Body of pancreas (tissue), 4 donors: ENCODE measurements at regions of chr15 and their contacts with region 1.

Region 1: DNA sequence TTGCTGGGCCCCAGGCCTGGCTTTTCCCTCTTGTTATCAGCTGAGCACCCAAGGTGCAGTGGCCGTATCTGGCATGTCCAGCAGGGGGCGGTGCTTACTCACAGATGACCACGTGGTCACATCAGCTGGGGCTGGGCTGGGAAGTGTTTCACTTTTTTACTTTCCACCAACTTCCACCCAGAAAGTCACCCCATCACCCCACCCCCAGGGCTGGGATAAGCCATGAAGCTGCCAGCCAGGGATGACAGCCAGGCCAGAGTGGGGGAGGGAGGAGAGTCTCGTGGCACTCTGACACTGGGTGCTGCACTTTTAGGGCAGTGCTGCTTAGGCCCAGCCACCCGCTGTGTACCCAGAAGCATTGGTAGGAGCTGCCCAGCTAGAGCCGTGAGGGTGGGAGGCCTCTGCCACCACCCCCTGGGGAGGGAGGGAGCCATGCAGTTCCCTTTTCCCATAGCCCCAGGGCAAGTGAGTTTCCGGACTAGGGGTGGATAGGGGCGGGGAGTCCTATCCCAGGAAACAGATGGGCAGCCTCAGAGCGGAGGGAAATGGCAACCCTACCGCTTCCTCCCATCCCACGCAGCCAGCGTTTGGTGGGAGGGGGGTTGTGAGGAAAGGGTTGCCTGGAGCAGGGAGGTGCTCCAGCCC is 6.1 kb downstream of the PPCDC start:
- DNase-seq: peak; percentile 93 to 96 (median 94)
- ATAC-seq: peak; percentile 88
- H3K4me3 ChIP-seq: no peak overlapping the region
- H3K27ac ChIP-seq: peak overlapping the region in 3 of 4 donors; percentile 23 to 33 (median 26)
- H3K4me1 ChIP-seq: peaks cover 13% of the 10 kb centered on the region
- H3K27me3 ChIP-seq: no peaks in the 10 kb centered on the region
- CTCF ChIP-seq: peak; percentile 87 to 96 (median 93)
- POLR2A ChIP-seq: no peak

Region 2: DNA sequence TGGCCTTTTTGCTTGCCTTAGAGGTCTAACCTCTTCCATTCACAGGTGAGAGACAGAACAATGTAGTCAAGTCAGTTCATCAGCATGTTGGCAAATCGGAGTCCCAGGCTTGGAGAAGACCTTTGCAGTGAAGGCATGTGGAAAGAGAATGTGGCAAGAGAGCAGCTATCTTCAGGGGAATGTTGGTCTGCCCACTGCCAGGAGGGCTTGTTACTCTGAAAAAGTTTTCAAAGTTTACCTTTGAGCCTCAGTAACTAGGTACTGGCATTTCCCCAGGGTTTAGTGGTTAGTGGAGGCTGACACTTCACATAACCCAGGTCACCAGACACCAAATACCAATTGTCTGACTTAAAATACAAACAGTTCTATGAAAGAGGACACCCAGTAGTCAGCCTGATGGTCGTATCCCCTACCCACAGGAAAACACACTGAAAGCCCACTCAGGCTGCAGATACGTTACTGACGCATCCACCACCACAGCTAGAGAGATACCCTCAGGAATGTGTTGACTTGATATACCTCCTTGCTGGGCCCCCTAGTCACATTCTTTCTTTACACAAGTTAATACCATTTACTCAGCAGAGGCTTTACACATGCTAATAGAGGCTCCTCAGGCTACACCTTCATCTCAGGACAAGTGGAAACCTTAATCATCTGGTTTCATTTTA is 498.2 kb before region 1 on chr15:
- intact Hi-C with region 1: no loop called
- DNase-seq: no peak
- ATAC-seq: no peak
- H3K4me3 ChIP-seq: no peak overlapping the region
- H3K27ac ChIP-seq: no peak overlapping the region
- H3K4me1 ChIP-seq: no peaks in the 10 kb centered on the region
- H3K27me3 ChIP-seq: no peaks in the 10 kb centered on the region
- CTCF ChIP-seq: no peak
- POLR2A ChIP-seq: no peak

Region 3: GRCh38 chr15:74739905-74740304 is 289.6 kb before region 1 on chr15:
- intact Hi-C with region 1: no loop called
- DNase-seq: no peak
- ATAC-seq: no peak
- H3K4me3 ChIP-seq: no peak overlapping the region
- H3K27ac ChIP-seq: no peak overlapping the region
- H3K4me1 ChIP-seq: no peaks in the 10 kb centered on the region
- H3K27me3 ChIP-seq: no peaks in the 10 kb centered on the region
- CTCF ChIP-seq: no peak
- POLR2A ChIP-seq: no peak

Region 4: DNA sequence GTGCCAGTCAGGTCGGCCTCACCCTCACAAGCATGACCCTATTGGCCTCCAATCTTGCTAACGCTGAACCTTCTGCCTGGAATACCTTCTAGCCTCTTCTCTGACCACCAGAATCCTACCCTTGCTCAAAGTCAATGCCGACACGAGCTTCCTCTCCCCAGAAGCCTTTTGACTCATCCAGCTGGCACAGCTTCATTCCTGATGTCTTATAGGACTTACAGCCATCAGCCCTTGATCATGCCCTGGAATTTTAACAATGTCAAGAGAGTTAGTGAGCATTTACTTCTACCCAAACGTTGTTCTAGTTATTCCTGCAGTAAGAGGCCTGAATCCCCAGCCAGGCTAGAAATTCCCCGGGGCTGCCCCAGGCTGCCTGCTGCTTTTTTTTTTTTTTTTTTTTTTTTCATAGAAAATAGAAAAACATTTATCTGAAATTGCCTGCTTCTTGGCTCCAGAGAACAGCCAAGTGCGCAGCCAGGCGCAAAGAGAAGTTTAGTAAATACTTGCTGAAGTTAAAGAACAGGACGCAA is 276.9 kb before region 1 on chr15:
- intact Hi-C with region 1: no loop called
- DNase-seq: no peak
- ATAC-seq: no peak
- H3K4me3 ChIP-seq: no peak overlapping the region
- H3K27ac ChIP-seq: no peak overlapping the region
- H3K4me1 ChIP-seq: no peaks in the 10 kb centered on the region
- H3K27me3 ChIP-seq: no peaks in the 10 kb centered on the region
- CTCF ChIP-seq: no peak
- POLR2A ChIP-seq: no peak

Region 5: GRCh38 chr15:75204340-75205063 is 175.0 kb after region 1 on chr15:
- intact Hi-C with region 1: loop called (anchors 5 kb)
- DNase-seq: peak; percentile 92 to 95 (median 94)
- ATAC-seq: peak; percentile 57
- H3K4me3 ChIP-seq: no peak overlapping the region
- H3K27ac ChIP-seq: peak overlapping the region in 3 of 4 donors; percentile 94 to 95 (median 95)
- H3K4me1 ChIP-seq: peaks cover 51% of the 10 kb centered on the region
- H3K27me3 ChIP-seq: no peaks in the 10 kb centered on the region
- CTCF ChIP-seq: peak; percentile 86 to 99 (median 98)
- POLR2A ChIP-seq: peak in 1 of 3 donors; percentile 4

Region 6: DNA sequence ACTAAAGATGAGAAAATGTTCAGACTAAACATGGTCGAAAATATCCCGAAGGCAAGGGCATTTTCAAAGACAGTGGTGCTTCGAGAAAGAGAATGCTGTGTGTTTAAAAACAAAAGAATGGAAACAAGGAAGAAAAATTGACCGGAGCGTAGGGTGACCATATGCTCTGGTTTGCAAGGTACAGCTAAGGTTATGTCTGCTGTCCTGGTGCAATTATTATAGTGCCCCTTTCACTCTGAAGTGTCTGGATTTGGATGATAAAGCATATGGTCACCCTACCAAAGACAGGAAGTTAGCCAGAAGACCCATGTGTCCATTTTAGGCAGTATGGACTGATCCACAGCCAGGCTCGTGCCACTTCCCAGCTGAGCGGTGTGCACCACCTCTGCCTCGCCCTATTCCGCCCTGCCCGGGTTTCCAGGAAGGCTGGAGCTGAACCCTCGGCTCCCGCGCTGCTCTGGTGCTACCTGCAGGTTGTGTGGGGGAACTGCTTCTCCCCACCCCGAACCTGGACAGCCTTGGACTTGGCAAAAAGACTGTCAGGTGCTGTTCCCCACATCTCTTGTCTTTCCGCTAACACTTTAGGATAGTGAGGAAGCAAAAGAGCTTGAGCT is 278.4 kb after region 1 on chr15:
- intact Hi-C with region 1: loop called (anchors 10 kb)
- DNase-seq: peak; percentile 64 to 82 (median 72)
- ATAC-seq: peak; percentile 92
- H3K4me3 ChIP-seq: no peak overlapping the region
- H3K27ac ChIP-seq: no peak overlapping the region
- H3K4me1 ChIP-seq: no peaks in the 10 kb centered on the region
- H3K27me3 ChIP-seq: peaks cover 0 to 4% of the 10 kb centered on the region in 2 donors
- CTCF ChIP-seq: peak; percentile 29 to 84 (median 62)
- POLR2A ChIP-seq: no peak